ENCODE measurements at regions of chr19 and their contacts with region 1.

Region 1: DNA sequence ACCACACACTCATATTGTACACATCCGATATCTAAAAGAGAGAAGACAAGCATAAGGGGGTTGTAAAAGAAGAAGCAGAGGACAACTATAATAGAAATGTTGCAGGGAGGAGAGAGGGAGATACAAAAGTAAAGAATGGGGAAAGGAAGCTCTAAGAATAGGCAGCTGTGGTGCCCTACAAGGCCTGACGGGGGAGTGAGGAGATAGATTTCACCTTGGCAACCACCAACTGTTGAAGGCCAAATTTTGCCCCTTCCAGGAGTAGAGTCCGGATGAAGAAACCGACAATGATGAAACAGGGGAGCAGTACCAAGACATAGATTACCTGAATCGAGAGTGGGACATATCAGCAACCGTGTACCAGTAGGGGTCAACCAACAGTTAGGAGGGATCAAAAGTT is 15.9 kb downstream of the SLC6A16 start:
- DNase-seq: no peak
- H3K4me3 ChIP-seq: no peak overlapping the region
- H3K27ac ChIP-seq: no peak overlapping the region
- H3K4me1 ChIP-seq: no peaks in the 10 kb centered on the region
- H3K27me3 ChIP-seq: peaks cover 45% of the 10 kb centered on the region; the same call in 1 of the 2 replicates
- CTCF ChIP-seq: no peak

Region 2: DNA sequence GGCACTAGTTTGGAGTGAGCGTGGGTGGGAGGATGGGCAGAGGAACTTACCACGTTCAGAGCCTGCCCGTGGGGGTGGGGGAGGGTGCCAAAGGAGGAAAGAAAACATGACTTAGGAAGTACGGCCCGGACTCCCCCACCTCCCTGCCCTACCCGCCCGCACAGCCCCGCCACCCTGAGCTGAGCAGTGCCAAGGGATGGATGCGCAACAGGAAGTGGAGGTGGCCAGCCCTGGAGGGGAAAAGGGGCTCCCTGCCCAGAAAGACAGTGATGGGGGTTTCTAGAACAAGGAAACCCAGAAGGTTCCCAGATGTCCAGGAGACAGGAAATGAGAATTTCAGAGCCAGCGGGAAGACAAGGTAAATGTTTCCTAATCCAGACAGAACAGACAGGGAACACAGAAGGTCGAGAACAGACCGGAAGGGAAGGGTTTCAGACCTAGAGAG is 46.8 kb after region 1 on chr19:
- CTCF ChIA-PET with region 1: interaction called, 14 read pairs
- POLR2A ChIA-PET with region 1: no interaction called
- intact Hi-C with region 1: no loop called
- DNase-seq: no peak
- H3K4me3 ChIP-seq: no peak overlapping the region
- H3K27ac ChIP-seq: no peak overlapping the region
- H3K4me1 ChIP-seq: no peaks in the 10 kb centered on the region
- H3K27me3 ChIP-seq: no peaks in the 10 kb centered on the region
- CTCF ChIP-seq: no peak

Region 3: GRCh38 chr19:49487277-49488045 is 178.4 kb after region 1 on chr19 and contains the start of gene RPL13A:
- CTCF ChIA-PET with region 1: no interaction called
- POLR2A ChIA-PET with region 1: no interaction called
- intact Hi-C with region 1: no loop called
- DNase-seq: peak; percentile 97 to 99
- H3K4me3 ChIP-seq: peak within 1 kb of the TSS; percentile 96
- H3K27ac ChIP-seq: peak within 1 kb of the TSS; percentile 91
- H3K4me1 ChIP-seq: peaks cover 18% of the 10 kb centered on the region
- H3K27me3 ChIP-seq: no peaks in the 10 kb centered on the region
- CTCF ChIP-seq: no peak
- total RNA-seq, gene RPL13A: 2,360 and 3,865 TPM in 2 replicates